ENCODE measurements at regions of chr11 and their contacts with region 1.

Region 1: DNA sequence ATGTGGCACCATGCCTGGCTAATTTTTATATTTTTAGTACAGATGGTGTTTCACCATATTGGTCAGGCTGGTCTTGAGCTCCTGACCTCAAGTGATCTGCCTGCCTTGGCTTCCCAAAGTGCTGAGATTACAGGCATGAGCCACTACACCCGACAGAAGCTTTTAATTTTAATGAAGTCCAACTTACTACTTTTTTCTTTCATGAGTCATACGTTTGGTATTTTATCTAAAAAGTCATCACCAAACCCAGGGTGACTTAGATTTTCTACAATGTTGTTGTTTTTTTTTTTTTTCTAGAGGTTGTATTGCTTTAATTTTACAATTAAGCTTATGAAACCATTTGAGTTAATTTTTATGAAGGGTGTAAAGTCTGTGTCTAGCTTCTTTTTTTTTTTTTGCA is 34.9 kb downstream of the JRKL start:
- DNase-seq: peak; percentile 44
- ATAC-seq: no peak; the same call in 1 of the 2 replicates
- H3K4me3 ChIP-seq: no peak overlapping the region
- H3K27ac ChIP-seq: no peak overlapping the region
- H3K4me1 ChIP-seq: no peaks in the 10 kb centered on the region
- H3K27me3 ChIP-seq: no peaks in the 10 kb centered on the region
- CTCF ChIP-seq: no peak
- POLR2A ChIP-seq: no peak
- RAD21 ChIP-seq: no peak

Region 2: DNA sequence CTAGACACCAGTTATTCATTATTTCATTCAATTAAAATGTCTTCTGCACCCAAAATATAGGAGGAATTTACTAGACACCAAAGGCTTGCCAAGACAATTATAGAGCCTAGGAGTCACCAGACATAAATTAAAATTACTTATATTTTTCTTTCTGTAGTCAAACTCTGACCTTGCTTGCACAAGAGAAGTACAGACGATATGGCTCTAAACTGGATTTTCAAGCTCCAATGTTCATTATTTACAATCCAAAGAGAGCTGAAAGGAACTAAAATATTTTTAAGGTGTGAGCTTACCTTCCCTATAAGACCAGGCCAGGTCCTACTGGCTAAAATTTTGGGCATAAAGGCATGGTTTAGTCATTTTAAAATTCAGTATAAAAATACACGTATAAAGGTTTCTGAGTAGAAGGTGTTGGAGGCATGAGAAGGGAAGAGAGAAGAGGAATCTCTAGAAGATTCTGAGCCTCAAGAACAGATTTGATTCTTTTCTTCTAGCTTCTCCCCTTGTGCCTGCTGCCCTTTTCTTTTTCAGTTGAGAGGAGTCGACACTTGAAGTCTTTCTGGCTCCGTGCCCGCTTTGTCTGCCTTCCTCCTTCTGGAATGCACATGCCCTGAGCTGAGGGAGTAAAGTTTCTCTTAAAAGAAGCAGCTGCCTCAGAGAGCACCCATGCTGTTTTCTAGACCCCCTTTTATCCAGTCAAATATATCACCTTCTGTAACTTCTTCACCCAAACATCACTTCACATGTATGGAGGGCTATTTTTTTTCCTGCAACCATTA is 1899.0 kb before region 1 on chr11:
- CTCF ChIA-PET with region 1: no interaction called
- POLR2A ChIA-PET with region 1: no interaction called
- dilution Hi-C with region 1: no loop called
- in situ Hi-C with region 1: no loop called
- intact Hi-C with region 1: loop called (anchors 5 kb)
- DNase-seq: peak; percentile 74
- ATAC-seq: peak; percentile 56
- H3K4me3 ChIP-seq: no peak overlapping the region
- H3K27ac ChIP-seq: no peak overlapping the region
- H3K4me1 ChIP-seq: no peaks in the 10 kb centered on the region
- H3K27me3 ChIP-seq: no peaks in the 10 kb centered on the region
- CTCF ChIP-seq: no peak
- POLR2A ChIP-seq: no peak
- RAD21 ChIP-seq: no peak

Region 3: DNA sequence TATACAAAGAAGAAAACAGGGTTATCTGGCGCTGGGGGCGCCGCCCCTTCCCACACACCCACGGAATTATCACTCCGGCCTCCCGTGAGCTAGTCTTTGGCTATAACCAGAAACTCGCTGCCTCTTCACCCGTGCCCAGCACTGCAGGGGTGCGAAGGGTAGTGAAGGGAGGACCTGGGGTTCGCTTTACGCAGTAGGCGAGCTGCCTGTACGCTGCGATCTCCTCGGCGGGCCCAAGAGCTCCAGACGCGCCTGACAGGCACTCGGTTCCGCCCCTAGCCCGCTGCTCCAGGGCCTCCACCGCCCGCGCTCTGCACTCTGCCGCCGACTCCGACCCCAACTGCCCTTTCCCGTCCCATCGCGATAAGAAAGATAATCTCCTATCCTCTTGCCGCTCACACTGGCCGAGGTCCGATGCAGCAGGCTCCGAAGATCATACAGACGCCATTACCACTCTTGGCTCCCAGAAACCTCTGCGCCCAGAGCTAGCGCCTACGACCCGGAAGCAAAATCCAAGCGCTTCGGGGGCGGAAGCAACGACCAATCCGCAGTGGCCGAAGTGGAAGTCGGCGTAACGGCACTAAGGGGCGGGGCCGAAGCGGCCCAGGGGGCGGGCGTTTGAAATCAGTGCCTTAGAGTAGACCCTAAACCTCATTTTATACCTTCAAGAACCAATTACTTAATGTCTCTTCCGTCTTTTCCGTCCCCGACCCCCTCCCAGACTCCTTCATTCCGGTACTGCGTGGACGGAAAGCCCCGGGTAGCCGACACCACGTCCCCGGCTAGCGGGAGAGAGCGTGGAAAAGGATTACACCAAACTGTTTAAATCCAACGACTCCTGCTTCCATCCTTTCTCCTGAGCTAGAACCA is 1451.4 kb before region 1 on chr11 and contains the starts of genes CWC15 and KDM4D:
- CTCF ChIA-PET with region 1: no interaction called
- POLR2A ChIA-PET with region 1: no interaction called
- dilution Hi-C with region 1: no loop called
- in situ Hi-C with region 1: loop called (anchors 10 kb)
- intact Hi-C with region 1: loop called (anchors 5 kb)
- DNase-seq: peak; percentile 90
- ATAC-seq: peak; percentile 100
- H3K4me3 ChIP-seq: peak within 1 kb of the TSS; percentile 95
- H3K27ac ChIP-seq: peak within 1 kb of the TSS; percentile 95
- H3K4me1 ChIP-seq: no peaks in the 10 kb centered on the region
- H3K27me3 ChIP-seq: no peaks in the 10 kb centered on the region
- CTCF ChIP-seq: no peak
- POLR2A ChIP-seq: peak; percentile 78
- RAD21 ChIP-seq: no peak; the same call in 1 of the 2 replicates
- total RNA-seq, gene CWC15: 48.6 and 70.0 TPM in 2 replicates
- total RNA-seq, gene KDM4D: 0.90 and 1.1 TPM in 2 replicates

Region 4: DNA sequence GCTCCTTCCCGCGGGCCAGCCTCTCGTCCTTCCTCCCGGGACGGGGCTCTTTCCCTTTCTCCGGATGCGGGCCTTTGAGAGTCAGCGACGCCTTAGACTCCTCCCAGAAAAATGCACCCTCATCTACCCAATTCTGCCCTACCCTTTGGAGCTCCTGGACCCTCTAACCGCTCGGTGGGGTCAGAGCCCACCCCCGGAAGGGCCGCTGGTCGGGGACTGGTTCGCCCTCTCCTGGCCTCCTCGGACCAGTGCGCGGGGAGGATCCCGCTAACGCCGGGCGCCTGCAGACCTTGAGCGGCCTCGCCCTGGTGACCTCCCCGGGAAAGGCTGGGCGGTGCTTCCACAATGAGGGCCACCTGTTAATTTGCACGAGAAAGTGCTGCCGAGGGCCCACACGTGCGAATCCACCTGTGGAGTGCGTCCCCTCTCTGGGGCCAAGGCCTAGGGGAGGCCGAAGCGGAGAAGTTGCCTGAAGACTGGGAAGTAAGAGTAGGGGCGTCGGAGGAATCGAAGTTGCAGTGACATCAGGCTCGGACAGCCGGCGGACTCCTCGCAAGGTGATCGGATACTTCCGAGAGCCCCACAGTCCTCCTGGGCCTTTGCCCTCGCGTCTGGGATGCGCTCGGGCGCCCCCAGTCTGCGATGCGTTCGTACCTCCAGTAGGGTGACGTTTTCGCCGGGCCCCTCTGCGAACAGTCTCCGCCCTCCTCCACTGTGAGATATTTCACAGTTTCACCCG is 1273.6 kb before region 1 on chr11:
- CTCF ChIA-PET with region 1: no interaction called
- POLR2A ChIA-PET with region 1: no interaction called
- dilution Hi-C with region 1: no loop called
- in situ Hi-C with region 1: no loop called
- intact Hi-C with region 1: loop called (anchors 2 kb)
- DNase-seq: peak; percentile 78
- ATAC-seq: peak; percentile 91
- H3K4me3 ChIP-seq: peak overlapping the region; percentile 35
- H3K27ac ChIP-seq: no peak overlapping the region
- H3K4me1 ChIP-seq: peaks cover 7% of the 10 kb centered on the region; the same call in 1 of the 2 replicates
- H3K27me3 ChIP-seq: 0 out of 2 replicates have a peak, but pooled peaks cover 2% of the 10 kb centered on the region
- CTCF ChIP-seq: peak; percentile 89
- POLR2A ChIP-seq: no peak
- RAD21 ChIP-seq: no peak

Region 5: GRCh38 chr11:95790123-95790932 is 634.4 kb before region 1 on chr11 and contains the start of gene CEP57:
- CTCF ChIA-PET with region 1: no interaction called
- POLR2A ChIA-PET with region 1: no interaction called
- dilution Hi-C with region 1: no loop called
- in situ Hi-C with region 1: no loop called
- intact Hi-C with region 1: loop called (anchors 2 kb)
- DNase-seq: peak; percentile 99
- ATAC-seq: peak; percentile 76
- H3K4me3 ChIP-seq: peak within 1 kb of the TSS; percentile 78
- H3K27ac ChIP-seq: peak within 1 kb of the TSS; percentile 85
- H3K4me1 ChIP-seq: no peaks in the 10 kb centered on the region
- H3K27me3 ChIP-seq: no peaks in the 10 kb centered on the region
- CTCF ChIP-seq: no peak
- POLR2A ChIP-seq: peak; percentile 58
- RAD21 ChIP-seq: no peak
- total RNA-seq, gene CEP57: 30.5 and 38.0 TPM in 2 replicates

Measured in IMR-90 (cell line).